ENCODE measurements at regions of chr14 and their contacts with region 1.

Region 1: GRCh38 chr14:74905375-74906142 is 17.5 kb downstream of the RPS6KL1 start:
- DNase-seq: peak in 1 of 2 experiments; percentile 95
- H3K4me3 ChIP-seq: no peak overlapping the region
- H3K27ac ChIP-seq: no peak overlapping the region
- H3K4me1 ChIP-seq: no peaks in the 10 kb centered on the region; a peak in 1 of 7 replicates
- H3K27me3 ChIP-seq: no peaks in the 10 kb centered on the region
- CTCF ChIP-seq: peak; percentile 84 to 97 (median 92)
- EP300 ChIP-seq: no peak
- POLR2A ChIP-seq: peak in 1 of 2 experiments; percentile 57; a peak in 1 of 3 replicates
- RAD21 ChIP-seq: peak; percentile 69 to 73

Region 2: GRCh38 chr14:74579447-74580274 is 325.9 kb before region 1 on chr14:
- CTCF ChIA-PET with region 1: no interaction called
- POLR2A ChIA-PET with region 1: no interaction called
- DNase-seq: no peak
- H3K4me3 ChIP-seq: no peak overlapping the region
- H3K27ac ChIP-seq: no peak overlapping the region
- H3K4me1 ChIP-seq: peaks cover 0 to 3% (median 0%) of the 10 kb centered on the region in 4 experiments; a peak in 2 of 7 replicates
- H3K27me3 ChIP-seq: no peaks in the 10 kb centered on the region
- CTCF ChIP-seq: no peak
- EP300 ChIP-seq: no peak
- POLR2A ChIP-seq: no peak
- RAD21 ChIP-seq: no peak

Region 3: GRCh38 chr14:74765721-74766120 is 139.8 kb before region 1 on chr14:
- CTCF ChIA-PET with region 1: no interaction called
- POLR2A ChIA-PET with region 1: no interaction called
- DNase-seq: no peak
- H3K4me3 ChIP-seq: peak overlapping the region; percentile 7 to 92 (median 47); a peak in 5 of 8 replicates
- H3K27ac ChIP-seq: no peak overlapping the region
- H3K4me1 ChIP-seq: peaks cover 0 to 3% (median 0%) of the 10 kb centered on the region in 4 experiments; a peak in 1 of 7 replicates
- H3K27me3 ChIP-seq: no peaks in the 10 kb centered on the region
- CTCF ChIP-seq: no peak
- EP300 ChIP-seq: no peak
- POLR2A ChIP-seq: no peak
- RAD21 ChIP-seq: no peak

Region 4: GRCh38 chr14:74860906-74861733 is 44.4 kb before region 1 on chr14:
- CTCF ChIA-PET with region 1: interaction called, 509 read pairs
- POLR2A ChIA-PET with region 1: interaction called, 80 read pairs
- DNase-seq: peak; percentile 79 to 98
- H3K4me3 ChIP-seq: no peak overlapping the region
- H3K27ac ChIP-seq: no peak overlapping the region
- H3K4me1 ChIP-seq: 0 out of 7 replicates have a peak, but pooled peaks cover 0 to 2% (median 0%) of the 10 kb centered on the region in 4 experiments
- H3K27me3 ChIP-seq: no peaks in the 10 kb centered on the region
- CTCF ChIP-seq: peak; percentile 81 to 89 (median 88)
- EP300 ChIP-seq: no peak
- POLR2A ChIP-seq: no peak
- RAD21 ChIP-seq: peak; percentile 93 to 95

Region 5: GRCh38 chr14:74875941-74876913 is 29.3 kb before region 1 on chr14 and contains the start of gene PROX2:
- CTCF ChIA-PET with region 1: interaction called, 49 read pairs
- POLR2A ChIA-PET with region 1: interaction called, 57 read pairs
- DNase-seq: no peak
- H3K4me3 ChIP-seq: no peak within 1 kb of the TSS
- H3K27ac ChIP-seq: no peak within 1 kb of the TSS
- H3K4me1 ChIP-seq: peaks cover 0 to 7% (median 3%) of the 10 kb centered on the region in 4 experiments; a peak in 3 of 7 replicates
- H3K27me3 ChIP-seq: no peaks in the 10 kb centered on the region
- CTCF ChIP-seq: no peak
- EP300 ChIP-seq: no peak
- POLR2A ChIP-seq: no peak
- RAD21 ChIP-seq: no peak
- total RNA-seq, gene PROX2: not detected in 2 replicates

Region 6: DNA sequence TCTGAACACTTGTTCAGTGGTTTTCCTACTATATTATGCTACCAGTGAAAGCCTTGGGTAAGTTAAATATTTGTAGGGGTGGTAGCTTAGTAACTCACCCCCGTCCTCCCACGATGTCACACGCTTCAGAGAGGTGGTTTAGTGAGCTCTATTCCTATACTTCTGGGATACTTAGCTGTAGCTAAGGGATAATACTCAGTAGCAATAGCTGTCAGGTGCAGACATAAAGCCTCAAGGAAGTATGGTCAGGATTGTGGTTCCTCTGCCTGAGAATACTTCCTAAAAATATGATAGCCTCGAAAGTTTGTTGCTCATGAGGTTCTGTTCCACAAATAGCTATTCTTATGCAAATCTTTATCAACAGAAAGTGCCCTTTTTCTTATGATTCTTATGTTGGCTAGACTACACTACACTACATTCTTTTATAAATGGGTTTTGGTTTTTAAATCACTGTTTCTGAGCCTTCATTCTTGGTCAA is 11.9 kb before region 1 on chr14:
- CTCF ChIA-PET with region 1: interaction called, 173 read pairs
- POLR2A ChIA-PET with region 1: interaction called, 15 read pairs
- DNase-seq: no peak
- H3K4me3 ChIP-seq: no peak overlapping the region
- H3K27ac ChIP-seq: no peak overlapping the region
- H3K4me1 ChIP-seq: no peaks in the 10 kb centered on the region; a peak in 1 of 7 replicates
- H3K27me3 ChIP-seq: no peaks in the 10 kb centered on the region
- CTCF ChIP-seq: no peak
- EP300 ChIP-seq: no peak
- POLR2A ChIP-seq: no peak
- RAD21 ChIP-seq: no peak

Region 7: DNA sequence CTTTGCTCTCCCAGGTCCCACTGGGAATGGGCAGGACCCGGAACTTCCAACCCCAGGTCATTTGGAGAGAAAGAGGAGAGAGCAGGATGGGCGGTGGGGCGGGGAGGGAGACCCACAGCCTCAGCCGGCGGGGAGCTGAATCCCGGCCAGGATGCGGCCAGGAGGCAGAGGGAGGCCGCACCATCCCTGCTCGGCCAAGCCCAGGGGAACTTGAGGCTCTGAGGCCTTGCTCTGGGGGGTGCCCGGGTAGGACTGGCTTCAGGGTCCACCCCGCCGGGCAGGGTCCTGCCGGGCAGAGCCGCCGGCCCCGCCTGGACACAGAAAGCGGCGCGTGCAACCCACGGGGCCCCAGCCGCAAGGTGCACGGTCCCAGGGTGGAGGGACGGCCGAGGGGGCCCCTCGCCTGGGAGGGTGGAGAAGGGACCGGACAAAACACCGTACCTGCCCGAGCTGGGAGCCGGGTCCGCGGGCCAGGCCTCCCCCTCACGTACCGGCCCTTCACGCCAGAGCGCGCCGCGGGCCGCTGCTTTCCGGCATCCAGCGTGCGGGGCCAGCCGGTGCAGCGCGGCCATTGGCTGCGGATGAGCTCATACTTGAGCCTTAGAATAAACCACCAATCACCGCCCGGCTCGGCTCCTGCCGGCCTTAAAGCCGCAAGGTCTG is 17.3 kb after region 1 on chr14 and contains the start of gene RPS6KL1:
- CTCF ChIA-PET with region 1: interaction called, 36 read pairs
- POLR2A ChIA-PET with region 1: interaction called, 16 read pairs
- DNase-seq: peak; percentile 50 to 86
- H3K4me3 ChIP-seq: peak within 1 kb of the TSS; percentile 49 to 78 (median 68)
- H3K27ac ChIP-seq: no peak within 1 kb of the TSS
- H3K4me1 ChIP-seq: no peaks in the 10 kb centered on the region
- H3K27me3 ChIP-seq: 0 out of 7 replicates have a peak, but pooled peaks cover 0 to 2% (median 0%) of the 10 kb centered on the region in 4 experiments
- CTCF ChIP-seq: no peak
- EP300 ChIP-seq: no peak
- POLR2A ChIP-seq: peak in 1 of 2 experiments; percentile 80; a peak in 2 of 3 replicates
- RAD21 ChIP-seq: no peak
- total RNA-seq, gene RPS6KL1: 11.3 and 13.8 TPM in 2 replicates

Region 8: DNA sequence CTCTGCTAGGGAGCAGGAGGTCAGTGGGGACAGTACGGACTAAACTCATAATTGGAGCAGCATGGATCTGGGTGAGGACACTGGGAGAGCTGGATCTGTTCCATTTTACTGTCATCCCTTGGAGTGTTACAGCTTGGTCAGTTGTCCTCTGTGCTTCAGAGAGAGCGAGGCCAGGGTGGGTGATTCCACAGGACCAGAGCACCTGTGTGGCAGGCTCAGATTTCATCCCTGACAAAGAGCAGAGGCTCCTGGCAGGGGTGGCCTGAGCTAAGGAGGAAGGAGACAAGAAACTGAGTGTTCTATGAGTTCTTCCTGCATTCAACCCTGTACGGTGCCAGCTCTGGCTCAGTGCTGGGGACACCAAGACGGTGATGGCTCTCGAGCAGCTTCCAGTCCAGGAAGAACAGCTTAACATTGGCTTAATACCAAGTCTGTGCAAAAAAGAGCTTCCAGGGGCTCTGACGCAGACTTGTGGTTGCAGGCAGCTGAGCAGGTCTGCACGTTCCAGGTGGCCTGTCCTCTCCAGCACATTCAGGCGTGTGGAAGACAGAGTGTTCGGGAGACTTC is 58.2 kb after region 1 on chr14:
- CTCF ChIA-PET with region 1: interaction called, 14 read pairs
- POLR2A ChIA-PET with region 1: no interaction called
- DNase-seq: no peak
- H3K4me3 ChIP-seq: no peak overlapping the region
- H3K27ac ChIP-seq: no peak overlapping the region
- H3K4me1 ChIP-seq: peaks cover 0 to 6% (median 0%) of the 10 kb centered on the region in 4 experiments; a peak in 3 of 7 replicates
- H3K27me3 ChIP-seq: no peaks in the 10 kb centered on the region
- CTCF ChIP-seq: no peak
- EP300 ChIP-seq: no peak
- POLR2A ChIP-seq: no peak
- RAD21 ChIP-seq: no peak

Measured in H1 (cell line).